ENCODE measurements at regions of chr12 and their contacts with region 1.

Region 1: DNA sequence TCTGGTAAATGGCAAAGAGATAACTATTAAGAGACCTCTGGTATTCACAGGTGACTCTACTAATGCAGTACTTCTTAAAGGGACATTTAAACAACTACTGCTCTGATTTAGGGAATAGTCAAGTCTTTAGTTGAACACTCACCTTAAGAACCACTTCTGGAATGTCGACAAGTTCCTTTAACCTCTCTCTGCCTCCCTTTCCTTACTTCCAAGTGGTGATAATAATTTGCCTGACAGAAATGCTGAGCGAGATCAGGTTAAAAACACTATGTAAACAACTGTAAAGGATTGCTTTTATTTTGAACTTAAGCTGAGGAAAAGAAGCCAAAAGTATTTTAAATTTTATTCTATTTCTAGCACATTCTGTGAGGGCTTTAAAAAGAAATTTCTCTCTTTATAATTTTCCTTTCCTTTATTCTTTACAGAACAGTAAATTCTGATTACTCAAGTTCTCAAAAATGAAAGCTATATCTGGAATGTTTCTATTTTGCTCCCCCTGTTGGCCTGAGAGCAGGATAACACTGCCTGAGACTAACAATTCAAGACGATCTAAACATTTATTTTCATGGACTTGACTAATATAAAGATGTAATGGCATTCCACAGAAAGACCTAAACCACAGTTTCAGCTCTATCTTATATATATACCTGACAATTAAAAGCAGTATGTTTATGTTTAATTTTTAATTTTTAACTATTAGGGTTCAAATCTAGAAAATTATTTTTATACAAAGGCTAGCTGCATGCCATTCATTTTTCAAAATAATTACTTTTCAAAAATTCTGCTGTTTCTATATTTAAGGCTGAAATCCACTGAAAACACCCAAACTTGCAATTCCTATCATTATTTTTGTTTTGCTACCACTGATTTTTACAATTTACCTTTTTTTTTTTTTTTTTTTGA is 29.2 kb downstream of the ZCCHC8 start:
- DNase-seq: peak in 4 of 5 donors; percentile 59 to 65 (median 63)
- H3K4me3 ChIP-seq: no peak overlapping the region
- H3K4me3 Mint-ChIP-seq: no peak overlapping the region
- H3K27ac ChIP-seq: no peak overlapping the region
- H3K27ac Mint-ChIP-seq: peak overlapping the region in 4 of 7 donors; percentile 12 to 65 (median 22)
- H3K4me1 ChIP-seq: no peaks in the 10 kb centered on the region
- H3K4me1 Mint-ChIP-seq: peaks cover 4 to 11% (median 9%) of the 10 kb centered on the region in 4 donors
- H3K27me3 ChIP-seq: no peaks in the 10 kb centered on the region
- H3K27me3 Mint-ChIP-seq: no peaks in the 10 kb centered on the region

Region 2: GRCh38 chr12:122406701-122407164 is 64.8 kb before region 1 on chr12:
- CTCF ChIA-PET with region 1: interaction called, 332 read pairs
- POLR2A ChIA-PET with region 1: interaction called, 7 read pairs
- intact Hi-C with region 1: no loop called
- DNase-seq: no peak
- H3K4me3 ChIP-seq: no peak overlapping the region
- H3K4me3 Mint-ChIP-seq: no peak overlapping the region
- H3K27ac ChIP-seq: no peak overlapping the region
- H3K27ac Mint-ChIP-seq: peak overlapping the region in 5 of 7 donors; percentile 12 to 84 (median 28)
- H3K4me1 ChIP-seq: peaks cover 25% of the 10 kb centered on the region
- H3K4me1 Mint-ChIP-seq: peaks cover 20 to 29% (median 25%) of the 10 kb centered on the region in 4 donors
- H3K27me3 ChIP-seq: no peaks in the 10 kb centered on the region
- H3K27me3 Mint-ChIP-seq: no peaks in the 10 kb centered on the region

Region 3: GRCh38 chr12:122421821-122422729 is 49.5 kb before region 1 on chr12 and contains the start of gene CLIP1:
- CTCF ChIA-PET with region 1: interaction called, 23 read pairs
- POLR2A ChIA-PET with region 1: no interaction called
- intact Hi-C with region 1: loop called (anchors 1 kb)
- DNase-seq: peak; percentile 50 to 71 (median 63)
- H3K4me3 ChIP-seq: peak within 1 kb of the TSS; percentile 67 to 80
- H3K4me3 Mint-ChIP-seq: peak within 1 kb of the TSS; percentile 89 to 96 (median 94)
- H3K27ac ChIP-seq: peak within 1 kb of the TSS; percentile 64
- H3K27ac Mint-ChIP-seq: peak within 1 kb of the TSS; percentile 87 to 97 (median 95)
- H3K4me1 ChIP-seq: peaks cover 45% of the 10 kb centered on the region
- H3K4me1 Mint-ChIP-seq: peaks cover 22 to 39% (median 31%) of the 10 kb centered on the region in 4 donors
- H3K27me3 ChIP-seq: no peaks in the 10 kb centered on the region
- H3K27me3 Mint-ChIP-seq: no peaks in the 10 kb centered on the region
- total RNA-seq, gene CLIP1: 63.5 to 65.7 TPM

Region 4: DNA sequence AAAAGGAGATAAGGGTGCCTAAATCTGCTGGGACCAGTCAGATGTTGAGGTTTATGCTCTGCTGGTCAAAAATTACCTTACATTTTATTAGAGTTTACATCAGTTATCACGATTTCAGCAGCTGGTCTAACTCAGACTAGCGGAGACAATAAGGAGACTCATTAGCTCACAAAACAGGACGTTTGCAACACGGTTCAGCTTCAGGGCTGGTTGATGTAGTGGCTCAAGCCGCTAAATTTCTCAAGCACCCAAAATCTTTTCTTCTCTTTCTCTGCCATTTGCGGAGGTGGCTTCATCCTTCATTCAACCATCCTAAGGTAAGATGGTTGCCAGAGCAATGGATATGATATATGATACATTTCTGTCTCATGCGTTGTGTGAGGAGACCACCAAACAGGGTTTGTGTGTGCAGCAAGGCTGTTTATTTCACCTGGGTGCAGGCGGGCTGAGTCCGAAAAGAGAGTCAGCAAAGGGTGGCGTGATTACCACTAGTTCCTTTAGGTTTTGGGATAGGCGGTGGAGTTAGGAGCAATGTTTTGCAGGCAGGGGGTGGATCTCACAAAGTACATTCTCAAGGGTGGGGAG is 18.8 kb before region 1 on chr12:
- CTCF ChIA-PET with region 1: interaction called, 12 read pairs
- POLR2A ChIA-PET with region 1: interaction called, 9 read pairs
- intact Hi-C with region 1: loop called (anchors 2 kb)
- DNase-seq: peak in 2 of 5 donors; percentile 13 to 18
- H3K4me3 ChIP-seq: peak overlapping the region in 1 of 2 donors; percentile 5
- H3K4me3 Mint-ChIP-seq: peak overlapping the region; percentile 32 to 90 (median 84)
- H3K27ac ChIP-seq: peak overlapping the region; percentile 54
- H3K27ac Mint-ChIP-seq: peak overlapping the region; percentile 90 to 99 (median 96)
- H3K4me1 ChIP-seq: peaks cover 31% of the 10 kb centered on the region
- H3K4me1 Mint-ChIP-seq: peaks cover 20 to 41% (median 28%) of the 10 kb centered on the region in 4 donors
- H3K27me3 ChIP-seq: no peaks in the 10 kb centered on the region
- H3K27me3 Mint-ChIP-seq: no peaks in the 10 kb centered on the region

Region 5: GRCh38 chr12:122486805-122487426 is 15.3 kb after region 1 on chr12:
- CTCF ChIA-PET with region 1: interaction called, 11 read pairs
- POLR2A ChIA-PET with region 1: interaction called, 3 read pairs
- intact Hi-C with region 1: no loop called
- DNase-seq: no peak
- H3K4me3 ChIP-seq: no peak overlapping the region
- H3K4me3 Mint-ChIP-seq: no peak overlapping the region
- H3K27ac ChIP-seq: no peak overlapping the region
- H3K27ac Mint-ChIP-seq: peak overlapping the region in 2 of 7 donors; percentile 57 to 89
- H3K4me1 ChIP-seq: no peaks in the 10 kb centered on the region
- H3K4me1 Mint-ChIP-seq: peaks cover 3 to 11% (median 6%) of the 10 kb centered on the region in 4 donors
- H3K27me3 ChIP-seq: no peaks in the 10 kb centered on the region
- H3K27me3 Mint-ChIP-seq: no peaks in the 10 kb centered on the region

Measured in CD4-positive, alpha-beta memory T cell (primary cell).